Activated CD4-positive, alpha-beta T cell treated with anti-CD3 and anti-CD28 coated beads for 36 hours (primary cell): ENCODE measurements at regions of chr11 and their contacts with region 1.

Region 1: GRCh38 chr11:100681064-100681502 is 6.0 kb upstream of the ARHGAP42 start:
- DNase-seq: peak; percentile 7
- ATAC-seq: no peak
- H3K4me3 Mint-ChIP-seq: no peak overlapping the region
- H3K27ac Mint-ChIP-seq: no peak overlapping the region
- H3K4me1 Mint-ChIP-seq: peaks cover 12% of the 10 kb centered on the region
- H3K27me3 Mint-ChIP-seq: peaks cover 7% of the 10 kb centered on the region

Region 2: DNA sequence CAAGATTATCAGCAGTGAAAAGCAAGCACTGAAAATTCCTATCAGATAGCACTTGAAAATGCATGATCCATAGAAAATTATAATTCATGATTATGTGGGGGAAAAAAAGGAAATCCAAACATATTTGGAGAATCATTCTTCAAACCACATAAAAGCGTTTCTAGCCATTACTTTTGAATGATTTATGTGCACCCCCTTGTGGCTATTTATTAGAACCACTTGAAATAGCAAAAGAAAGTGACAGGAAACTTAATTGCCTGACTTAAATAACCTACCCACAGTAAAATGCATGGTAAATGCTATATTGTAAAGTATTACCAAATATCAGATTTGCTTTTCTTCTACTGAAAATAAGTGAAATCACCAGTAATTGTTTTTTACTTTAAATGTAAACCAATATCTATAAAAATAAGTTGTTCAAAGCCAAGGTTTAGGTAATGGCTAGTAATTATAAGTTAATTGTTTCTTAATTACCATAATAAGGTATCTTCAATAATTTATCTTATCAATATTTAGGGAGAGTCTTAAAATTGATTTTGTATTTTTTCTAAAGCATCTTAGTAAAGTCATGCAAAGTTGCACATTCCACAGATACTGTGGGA is 174.5 kb after region 1 on chr11:
- CTCF ChIA-PET with region 1: no interaction called
- POLR2A ChIA-PET with region 1: no interaction called
- intact Hi-C with region 1: loop called (anchors 5 to 10 kb)
- DNase-seq: no peak
- ATAC-seq: no peak
- H3K4me3 Mint-ChIP-seq: no peak overlapping the region
- H3K27ac Mint-ChIP-seq: no peak overlapping the region
- H3K4me1 Mint-ChIP-seq: no peaks in the 10 kb centered on the region
- H3K27me3 Mint-ChIP-seq: no peaks in the 10 kb centered on the region

Region 3: GRCh38 chr11:100930185-100930778 is 249.2 kb after region 1 on chr11:
- CTCF ChIA-PET with region 1: no interaction called
- POLR2A ChIA-PET with region 1: no interaction called
- intact Hi-C with region 1: loop called (anchors 2 to 5 kb)
- DNase-seq: no peak
- ATAC-seq: no peak
- H3K4me3 Mint-ChIP-seq: no peak overlapping the region
- H3K27ac Mint-ChIP-seq: no peak overlapping the region
- H3K4me1 Mint-ChIP-seq: no peaks in the 10 kb centered on the region
- H3K27me3 Mint-ChIP-seq: peaks cover 2% of the 10 kb centered on the region